Breast epithelium (tissue), 4 donors: ENCODE measurements at regions of chr7 and their contacts with region 1.

Region 1: GRCh38 chr7:132249614-132249972 is 326.7 kb downstream of the PLXNA4 start:
- DNase-seq: peak; percentile 57 to 61
- H3K4me3 ChIP-seq: peak overlapping the region in 2 of 3 donors; percentile 7 to 31
- H3K27ac ChIP-seq: peak overlapping the region; percentile 86 to 90
- H3K4me1 ChIP-seq: peaks cover 0 to 10% of the 10 kb centered on the region in 2 donors
- H3K27me3 ChIP-seq: no peaks in the 10 kb centered on the region
- CTCF ChIP-seq: peak in 2 of 3 donors; percentile 28 to 31
- POLR2A ChIP-seq: no peak

Region 2: DNA sequence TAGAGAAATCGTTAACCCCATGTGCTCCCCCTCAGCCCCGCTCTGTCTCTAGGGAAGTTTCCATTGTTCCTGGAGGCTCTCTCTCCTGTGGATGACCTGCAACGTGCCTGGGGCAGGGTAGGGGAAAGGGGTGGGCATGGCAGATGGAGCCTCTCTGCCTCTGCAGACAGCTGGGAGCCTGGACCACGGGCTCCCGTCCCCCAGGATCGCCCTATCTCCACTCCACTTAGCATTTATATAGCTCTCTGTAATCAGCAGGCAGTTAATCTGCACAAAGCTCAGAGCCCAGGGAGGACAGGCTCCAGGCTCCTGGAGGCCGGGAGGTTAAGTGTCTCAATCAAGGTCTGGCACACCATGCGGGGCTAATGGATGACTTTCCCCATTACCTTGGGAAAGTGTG is 43.0 kb before region 1 on chr7:
- intact Hi-C with region 1: no loop called
- DNase-seq: no peak
- H3K4me3 ChIP-seq: no peak overlapping the region
- H3K27ac ChIP-seq: no peak overlapping the region
- H3K4me1 ChIP-seq: no peaks in the 10 kb centered on the region
- H3K27me3 ChIP-seq: no peaks in the 10 kb centered on the region
- CTCF ChIP-seq: no peak
- POLR2A ChIP-seq: no peak

Region 3: GRCh38 chr7:132270517-132270916 is 20.9 kb after region 1 on chr7:
- intact Hi-C with region 1: loop called (anchors 1 kb)
- DNase-seq: no peak
- H3K4me3 ChIP-seq: no peak overlapping the region
- H3K27ac ChIP-seq: no peak overlapping the region
- H3K4me1 ChIP-seq: no peaks in the 10 kb centered on the region
- H3K27me3 ChIP-seq: no peaks in the 10 kb centered on the region
- CTCF ChIP-seq: no peak
- POLR2A ChIP-seq: no peak